CD8-positive, alpha-beta T cell (primary cell): ENCODE measurements at regions of chr1 and their contacts with region 1.

Region 1: DNA sequence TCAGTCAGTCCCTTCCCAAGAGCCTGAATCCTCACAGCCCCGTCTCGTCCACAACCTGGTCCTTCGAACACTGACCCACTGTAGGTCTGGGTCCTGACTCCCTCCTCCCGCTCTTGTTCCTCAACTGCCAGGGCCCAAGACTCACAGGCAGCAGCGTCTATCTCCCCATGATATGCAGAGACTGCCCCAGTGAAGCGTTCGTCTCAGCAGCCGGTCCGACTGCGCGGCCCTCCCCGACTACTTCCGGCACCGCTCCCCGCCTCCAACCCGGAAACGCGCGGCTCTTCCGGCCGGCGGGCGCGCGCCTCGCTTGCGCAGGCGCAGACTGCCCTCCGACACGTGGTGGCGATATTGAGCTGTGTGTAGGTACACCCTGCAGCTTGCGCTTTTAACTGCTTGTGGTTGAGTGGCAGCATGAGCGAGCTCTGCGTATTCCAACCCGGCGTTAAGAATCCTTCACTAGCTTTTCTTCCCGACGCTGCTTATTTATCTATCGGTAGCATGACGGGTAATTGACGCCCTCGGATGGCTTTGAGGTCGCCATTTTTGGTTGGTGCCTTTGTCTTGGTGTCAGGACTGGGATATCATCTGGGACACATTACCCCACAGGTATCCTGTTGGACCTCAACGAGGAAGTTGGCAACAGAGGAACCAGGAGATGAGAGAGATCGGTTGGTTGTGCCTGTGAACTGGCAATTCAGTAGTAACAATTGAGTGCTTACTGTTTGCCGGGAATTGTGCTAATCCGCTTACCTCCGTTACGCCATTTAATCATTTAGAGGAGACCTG is at the start of gene TAF12:
- DNase-seq: peak; percentile 87 to 98 (median 91)
- ATAC-seq: peak; percentile 79
- H3K4me3 ChIP-seq: peak within 1 kb of the TSS; percentile 62 to 92
- H3K4me3 Mint-ChIP-seq: peak within 1 kb of the TSS; percentile 100
- H3K27ac ChIP-seq: peak within 1 kb of the TSS; percentile 88 to 90
- H3K27ac Mint-ChIP-seq: peak within 1 kb of the TSS; percentile 99
- H3K4me1 ChIP-seq: peaks cover 34% of the 10 kb centered on the region
- H3K4me1 Mint-ChIP-seq: peaks cover 54% of the 10 kb centered on the region
- H3K27me3 ChIP-seq: no peaks in the 10 kb centered on the region
- H3K27me3 Mint-ChIP-seq: no peaks in the 10 kb centered on the region
- CTCF ChIP-seq: peak; percentile 32
- total RNA-seq, gene TAF12: 7.7 to 8.5 TPM

Region 2: GRCh38 chr1:28329395-28330153 is 313.5 kb before region 1 on chr1:
- CTCF ChIA-PET with region 1: no interaction called
- POLR2A ChIA-PET with region 1: interaction called, 10 read pairs
- intact Hi-C with region 1: no loop called
- DNase-seq: peak in 6 of 9 experiments; percentile 18 to 72 (median 46)
- ATAC-seq: peak; percentile 20
- H3K4me3 ChIP-seq: peak overlapping the region; percentile 53 to 57
- H3K4me3 Mint-ChIP-seq: peak overlapping the region; percentile 95
- H3K27ac ChIP-seq: peak overlapping the region; percentile 84 to 86
- H3K27ac Mint-ChIP-seq: peak overlapping the region; percentile 98
- H3K4me1 ChIP-seq: peaks cover 20% of the 10 kb centered on the region
- H3K4me1 Mint-ChIP-seq: peaks cover 34% of the 10 kb centered on the region
- H3K27me3 ChIP-seq: no peaks in the 10 kb centered on the region
- H3K27me3 Mint-ChIP-seq: no peaks in the 10 kb centered on the region
- CTCF ChIP-seq: no peak

Region 3: DNA sequence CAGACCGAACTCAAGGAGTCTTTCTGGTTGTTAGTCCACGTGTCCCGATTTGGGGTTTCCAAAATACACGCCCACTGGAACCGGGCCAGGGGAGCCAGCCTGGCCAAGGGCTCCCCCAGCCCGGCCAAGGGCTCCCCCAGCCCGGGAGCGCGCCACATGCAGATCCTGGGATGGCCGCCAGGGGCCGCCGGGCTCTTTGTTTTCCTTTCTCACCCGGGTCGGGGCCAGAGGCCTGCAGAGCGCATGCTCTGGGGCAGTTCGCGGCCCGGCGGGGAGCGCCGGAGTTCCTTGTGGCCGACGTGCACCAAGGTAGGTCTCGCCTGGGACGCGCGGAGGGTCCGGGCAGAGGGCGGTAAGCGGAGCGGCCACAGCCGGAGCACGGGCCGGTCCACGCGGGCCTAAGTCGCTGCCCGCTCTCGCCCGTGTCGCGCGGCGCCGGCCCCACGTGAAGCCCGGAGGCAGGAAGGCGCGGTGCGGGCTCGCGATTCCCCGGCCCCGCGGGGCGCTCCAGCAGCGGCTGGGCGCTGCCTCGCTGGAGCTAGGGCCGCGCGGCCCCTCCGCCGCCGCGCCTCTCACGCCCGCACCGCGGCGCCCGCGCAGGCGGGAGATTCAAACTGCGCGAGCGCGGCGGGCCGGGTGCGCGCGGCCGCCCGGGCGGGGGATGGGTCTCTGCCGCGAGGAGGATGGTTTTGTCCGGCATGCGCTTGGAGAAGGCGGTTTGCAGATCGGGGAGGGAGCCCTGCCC is 124.9 kb before region 1 on chr1:
- CTCF ChIA-PET with region 1: interaction called, 3 read pairs
- POLR2A ChIA-PET with region 1: interaction called, 3 read pairs
- intact Hi-C with region 1: loop called in 1 of 2 experiments (anchors 5 kb)
- DNase-seq: peak; percentile 76 to 93 (median 88)
- ATAC-seq: peak; percentile 91
- H3K4me3 ChIP-seq: peak overlapping the region; percentile 59 to 79
- H3K4me3 Mint-ChIP-seq: peak overlapping the region; percentile 89
- H3K27ac ChIP-seq: peak overlapping the region; percentile 55 to 57
- H3K27ac Mint-ChIP-seq: peak overlapping the region; percentile 84
- H3K4me1 ChIP-seq: peaks cover 21% of the 10 kb centered on the region
- H3K4me1 Mint-ChIP-seq: peaks cover 28% of the 10 kb centered on the region
- H3K27me3 ChIP-seq: no peaks in the 10 kb centered on the region
- H3K27me3 Mint-ChIP-seq: no peaks in the 10 kb centered on the region
- CTCF ChIP-seq: peak; percentile 98

Region 4: GRCh38 chr1:28560886-28561285 is 82.2 kb before region 1 on chr1:
- CTCF ChIA-PET with region 1: no interaction called
- POLR2A ChIA-PET with region 1: no interaction called
- intact Hi-C with region 1: no loop called
- DNase-seq: no peak
- ATAC-seq: no peak
- H3K4me3 ChIP-seq: no peak overlapping the region
- H3K4me3 Mint-ChIP-seq: no peak overlapping the region
- H3K27ac ChIP-seq: no peak overlapping the region
- H3K27ac Mint-ChIP-seq: no peak overlapping the region
- H3K4me1 ChIP-seq: no peaks in the 10 kb centered on the region
- H3K4me1 Mint-ChIP-seq: no peaks in the 10 kb centered on the region
- H3K27me3 ChIP-seq: no peaks in the 10 kb centered on the region
- H3K27me3 Mint-ChIP-seq: no peaks in the 10 kb centered on the region
- CTCF ChIP-seq: no peak

Region 5: DNA sequence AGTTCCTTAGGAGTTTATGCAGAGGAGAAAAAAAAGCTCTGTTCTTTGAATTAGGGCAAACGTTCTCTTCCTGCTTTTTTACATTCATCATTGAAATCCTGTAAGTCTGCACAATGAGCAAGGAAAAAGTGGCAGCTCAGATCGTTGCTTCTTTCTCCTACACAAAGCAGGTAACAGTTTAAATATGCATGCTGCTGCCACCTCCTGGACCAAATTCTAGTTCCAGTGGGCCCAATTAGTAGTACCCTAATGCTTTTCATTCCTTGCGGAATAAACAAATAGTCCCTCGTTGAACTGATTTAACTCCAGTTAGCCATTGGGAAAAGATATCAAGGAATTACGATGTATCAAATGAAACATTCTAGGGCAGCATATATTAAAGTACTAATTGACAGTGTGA is 113.8 kb after region 1 on chr1:
- CTCF ChIA-PET with region 1: interaction called, 4 read pairs
- POLR2A ChIA-PET with region 1: interaction called, 4 read pairs
- intact Hi-C with region 1: loop called in 1 of 2 experiments (anchors 1 kb)
- DNase-seq: peak in 3 of 9 experiments; percentile 22 to 45 (median 36)
- ATAC-seq: no peak
- H3K4me3 ChIP-seq: no peak overlapping the region
- H3K4me3 Mint-ChIP-seq: no peak overlapping the region
- H3K27ac ChIP-seq: no peak overlapping the region
- H3K27ac Mint-ChIP-seq: no peak overlapping the region
- H3K4me1 ChIP-seq: peaks cover 37% of the 10 kb centered on the region
- H3K4me1 Mint-ChIP-seq: peaks cover 42% of the 10 kb centered on the region
- H3K27me3 ChIP-seq: no peaks in the 10 kb centered on the region
- H3K27me3 Mint-ChIP-seq: no peaks in the 10 kb centered on the region
- CTCF ChIP-seq: peak; percentile 39

Region 6: GRCh38 chr1:28926629-28927265 is 283.7 kb after region 1 on chr1:
- CTCF ChIA-PET with region 1: no interaction called
- POLR2A ChIA-PET with region 1: interaction called, 3 read pairs
- intact Hi-C with region 1: loop called (anchors 1 to 5 kb)
- DNase-seq: peak in 6 of 9 experiments; percentile 21 to 91 (median 42)
- ATAC-seq: peak; percentile 78
- H3K4me3 ChIP-seq: peak overlapping the region; percentile 22 to 29
- H3K4me3 Mint-ChIP-seq: peak overlapping the region; percentile 53
- H3K27ac ChIP-seq: peak overlapping the region; percentile 36 to 82
- H3K27ac Mint-ChIP-seq: peak overlapping the region; percentile 87
- H3K4me1 ChIP-seq: peaks cover 71% of the 10 kb centered on the region
- H3K4me1 Mint-ChIP-seq: peaks cover 74% of the 10 kb centered on the region
- H3K27me3 ChIP-seq: no peaks in the 10 kb centered on the region
- H3K27me3 Mint-ChIP-seq: no peaks in the 10 kb centered on the region
- CTCF ChIP-seq: no peak